Activated B cell treated with CpG ODN at 0.5 μM for 24 hours (primary cell): ENCODE measurements at regions of chr11 and their contacts with region 1.

Region 1: GRCh38 chr11:124769801-124770639 is 7.9 kb upstream of the ESAM start:
- DNase-seq: no peak
- ATAC-seq: no peak
- H3K4me3 Mint-ChIP-seq: no peak overlapping the region
- H3K27ac Mint-ChIP-seq: no peak overlapping the region
- H3K4me1 Mint-ChIP-seq: peaks cover under 1% of the 10 kb centered on the region
- H3K27me3 Mint-ChIP-seq: no peaks in the 10 kb centered on the region
- CTCF ChIP-seq: no peak

Region 2: GRCh38 chr11:123473941-123474677 is 1295.9 kb before region 1 on chr11:
- CTCF ChIA-PET with region 1: no interaction called
- POLR2A ChIA-PET with region 1: no interaction called
- intact Hi-C with region 1: no loop called
- DNase-seq: no peak
- ATAC-seq: no peak
- H3K4me3 Mint-ChIP-seq: no peak overlapping the region
- H3K27ac Mint-ChIP-seq: no peak overlapping the region
- H3K4me1 Mint-ChIP-seq: peaks cover 14% of the 10 kb centered on the region
- H3K27me3 Mint-ChIP-seq: no peaks in the 10 kb centered on the region
- CTCF ChIP-seq: no peak

Region 3: GRCh38 chr11:124788521-124788920 is 18.5 kb after region 1 on chr11:
- CTCF ChIA-PET with region 1: interaction called, 13 read pairs
- POLR2A ChIA-PET with region 1: interaction called, 7 read pairs
- intact Hi-C with region 1: loop called (anchors 2 kb)
- DNase-seq: no peak
- ATAC-seq: no peak
- H3K4me3 Mint-ChIP-seq: no peak overlapping the region
- H3K27ac Mint-ChIP-seq: no peak overlapping the region
- H3K4me1 Mint-ChIP-seq: peaks cover 13% of the 10 kb centered on the region
- H3K27me3 Mint-ChIP-seq: no peaks in the 10 kb centered on the region
- CTCF ChIP-seq: no peak

Region 4: GRCh38 chr11:124793466-124794278 is 23.7 kb after region 1 on chr11:
- CTCF ChIA-PET with region 1: interaction called, 13 read pairs
- POLR2A ChIA-PET with region 1: no interaction called
- intact Hi-C with region 1: loop called (anchors 2 kb)
- DNase-seq: no peak
- ATAC-seq: peak; percentile 60
- H3K4me3 Mint-ChIP-seq: no peak overlapping the region
- H3K27ac Mint-ChIP-seq: no peak overlapping the region
- H3K4me1 Mint-ChIP-seq: peaks cover 23% of the 10 kb centered on the region
- H3K27me3 Mint-ChIP-seq: no peaks in the 10 kb centered on the region
- CTCF ChIP-seq: peak; percentile 31

Region 5: GRCh38 chr11:125123947-125124617 is 354.1 kb after region 1 on chr11:
- CTCF ChIA-PET with region 1: no interaction called
- POLR2A ChIA-PET with region 1: no interaction called
- intact Hi-C with region 1: no loop called
- DNase-seq: no peak
- ATAC-seq: peak; percentile 71
- H3K4me3 Mint-ChIP-seq: peak overlapping the region; percentile 26
- H3K27ac Mint-ChIP-seq: no peak overlapping the region
- H3K4me1 Mint-ChIP-seq: peaks cover 14% of the 10 kb centered on the region
- H3K27me3 Mint-ChIP-seq: peaks cover 32% of the 10 kb centered on the region
- CTCF ChIP-seq: no peak